ENCODE measurements at regions of chr12 and their contacts with region 1.

Region 1: GRCh38 chr12:111788178-111788654 is 21.5 kb downstream of the ALDH2 start:
- DNase-seq: no peak
- ATAC-seq: peak; percentile 75
- H3K4me3 ChIP-seq: no peak overlapping the region
- H3K27ac ChIP-seq: no peak overlapping the region
- H3K4me1 ChIP-seq: peaks cover 36% of the 10 kb centered on the region
- H3K27me3 ChIP-seq: no peaks in the 10 kb centered on the region
- CTCF ChIP-seq: peak; percentile 82
- EP300 ChIP-seq: no peak
- POLR2A ChIP-seq: no peak
- RAD21 ChIP-seq: peak; percentile 81

Region 2: DNA sequence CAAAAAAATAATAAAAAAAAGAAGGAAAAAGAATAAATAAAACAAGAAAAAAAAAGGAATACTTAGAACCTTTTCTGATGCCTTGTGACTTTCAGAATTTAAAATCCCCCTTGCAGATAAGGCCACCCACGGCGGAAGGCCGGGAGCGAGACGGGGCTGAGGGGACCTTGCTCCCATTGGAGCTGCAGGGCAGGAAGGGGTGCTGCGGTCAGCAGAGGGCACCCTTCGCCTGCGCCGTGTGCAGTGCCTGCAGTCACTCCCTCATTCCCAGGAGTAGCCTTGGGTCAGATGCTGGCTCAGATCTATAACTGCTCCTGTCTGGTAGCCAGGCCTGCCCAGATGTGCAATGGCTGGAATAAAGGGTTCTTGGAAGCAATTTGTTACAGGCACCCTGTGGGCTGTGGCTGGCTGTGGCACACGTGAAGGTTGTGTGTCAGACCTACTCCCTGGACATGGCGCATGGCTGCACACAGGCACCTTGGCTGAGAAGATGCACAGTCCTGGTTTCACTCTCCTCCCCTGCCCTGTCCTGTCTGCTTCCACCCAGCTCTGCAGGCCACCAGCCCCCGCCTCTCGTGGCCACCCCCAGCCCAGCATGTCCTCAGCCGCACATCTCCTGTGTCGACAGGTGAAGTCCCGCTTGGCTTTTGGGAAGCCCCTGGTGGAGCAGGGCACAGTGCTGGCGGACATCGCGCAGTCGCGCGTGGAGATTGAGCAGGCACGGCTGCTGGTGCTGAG is 34.9 kb before region 1 on chr12:
- CTCF ChIA-PET with region 1: interaction called, 43 read pairs
- POLR2A ChIA-PET with region 1: interaction called, 5 read pairs
- in situ Hi-C with region 1: loop called (anchors 5 kb)
- intact Hi-C with region 1: loop called (anchors 1 kb)
- DNase-seq: peak; percentile 53
- ATAC-seq: peak; percentile 98
- H3K4me3 ChIP-seq: no peak overlapping the region
- H3K27ac ChIP-seq: no peak overlapping the region
- H3K4me1 ChIP-seq: peaks cover 16% of the 10 kb centered on the region
- H3K27me3 ChIP-seq: no peaks in the 10 kb centered on the region
- CTCF ChIP-seq: peak; percentile 98
- EP300 ChIP-seq: no peak
- POLR2A ChIP-seq: no peak
- RAD21 ChIP-seq: peak; percentile 98

Region 3: GRCh38 chr12:111766608-111767361 is 21.4 kb before region 1 on chr12 and contains the start of gene ALDH2:
- CTCF ChIA-PET with region 1: no interaction called
- POLR2A ChIA-PET with region 1: interaction called, 17 read pairs
- in situ Hi-C with region 1: no loop called
- intact Hi-C with region 1: no loop called
- DNase-seq: peak; percentile 72
- ATAC-seq: peak; percentile 95
- H3K4me3 ChIP-seq: peak within 1 kb of the TSS; percentile 79 to 92 (median 80)
- H3K27ac ChIP-seq: peak within 1 kb of the TSS; percentile 74
- H3K4me1 ChIP-seq: peaks cover 48% of the 10 kb centered on the region
- H3K27me3 ChIP-seq: no peaks in the 10 kb centered on the region; a peak in 1 of 5 replicates
- CTCF ChIP-seq: peak; percentile 61
- EP300 ChIP-seq: no peak
- POLR2A ChIP-seq: peak; percentile 69 to 94
- RAD21 ChIP-seq: peak; percentile 59; the same call in 1 of the 2 replicates
- total RNA-seq, gene ALDH2: 72.8 and 103 TPM in 2 replicates

Region 4: DNA sequence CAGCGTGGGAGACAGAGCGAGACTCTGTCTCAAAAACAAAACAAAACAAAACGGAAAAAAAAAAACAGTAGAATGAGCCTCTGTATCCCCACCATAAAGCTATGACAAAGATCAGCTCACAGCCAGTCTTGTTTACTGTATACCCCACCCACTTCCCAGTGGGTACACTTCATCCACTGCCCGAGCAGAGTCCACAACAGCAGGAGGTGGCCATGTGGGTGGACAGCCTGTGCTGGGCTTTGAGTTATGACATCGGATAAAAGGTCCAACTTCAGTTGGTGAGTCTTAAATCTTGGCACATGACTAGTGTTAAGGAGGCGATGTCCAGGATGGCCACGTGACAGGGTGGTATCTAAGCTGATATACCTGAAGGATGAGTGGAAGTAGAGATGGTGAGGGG is 19.0 kb after region 1 on chr12:
- CTCF ChIA-PET with region 1: no interaction called
- POLR2A ChIA-PET with region 1: no interaction called
- in situ Hi-C with region 1: no loop called
- intact Hi-C with region 1: no loop called
- DNase-seq: no peak
- ATAC-seq: peak; percentile 83
- H3K4me3 ChIP-seq: no peak overlapping the region
- H3K27ac ChIP-seq: no peak overlapping the region
- H3K4me1 ChIP-seq: peaks cover 15% of the 10 kb centered on the region
- H3K27me3 ChIP-seq: no peaks in the 10 kb centered on the region
- CTCF ChIP-seq: no peak
- EP300 ChIP-seq: no peak
- POLR2A ChIP-seq: no peak
- RAD21 ChIP-seq: no peak

Region 5: GRCh38 chr12:111887926-111888745 is 99.9 kb after region 1 on chr12:
- CTCF ChIA-PET with region 1: no interaction called
- POLR2A ChIA-PET with region 1: no interaction called
- in situ Hi-C with region 1: no loop called
- intact Hi-C with region 1: no loop called
- DNase-seq: no peak
- ATAC-seq: no peak
- H3K4me3 ChIP-seq: no peak overlapping the region
- H3K27ac ChIP-seq: no peak overlapping the region
- H3K4me1 ChIP-seq: no peaks in the 10 kb centered on the region
- H3K27me3 ChIP-seq: no peaks in the 10 kb centered on the region
- CTCF ChIP-seq: no peak
- EP300 ChIP-seq: no peak
- POLR2A ChIP-seq: no peak
- RAD21 ChIP-seq: no peak

Region 6: DNA sequence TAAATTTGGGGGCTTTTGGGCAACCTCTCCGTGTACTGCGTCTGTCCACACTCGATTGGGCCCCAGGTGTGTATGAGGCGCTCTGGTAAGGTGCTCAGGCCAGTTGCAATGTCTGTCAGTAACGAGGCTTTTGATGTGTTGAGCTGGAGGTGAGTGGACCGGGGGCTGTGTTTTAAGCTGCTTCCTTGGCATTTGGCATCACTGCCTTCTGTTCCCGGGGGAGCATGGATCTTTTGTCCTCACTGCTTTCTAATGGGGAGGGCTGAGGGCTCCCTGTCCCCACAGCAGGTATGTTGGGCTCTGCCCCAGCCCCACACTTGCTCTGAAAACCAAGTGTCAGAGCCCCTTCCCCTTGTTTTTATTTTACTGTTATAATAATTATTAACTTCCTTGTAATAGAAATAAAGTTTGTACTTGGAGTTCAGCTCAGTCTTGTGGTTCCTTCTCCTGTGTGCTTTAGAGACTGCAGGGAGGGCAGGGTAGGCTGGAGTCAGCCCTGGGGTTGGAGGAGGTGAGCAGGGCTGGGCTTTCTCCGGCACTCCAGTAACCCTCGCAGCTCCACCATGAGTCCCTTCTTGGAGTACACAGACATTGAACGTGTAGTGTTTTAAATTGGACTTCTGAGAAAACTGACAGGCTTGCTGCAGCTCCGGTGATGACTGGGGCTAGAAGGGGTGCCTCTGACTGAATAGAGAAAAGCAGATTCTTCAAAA is 365.1 kb after region 1 on chr12:
- CTCF ChIA-PET with region 1: no interaction called
- POLR2A ChIA-PET with region 1: no interaction called
- in situ Hi-C with region 1: no loop called
- intact Hi-C with region 1: no loop called
- DNase-seq: no peak
- ATAC-seq: no peak; the same call in 2 of the 3 replicates
- H3K4me3 ChIP-seq: no peak overlapping the region
- H3K27ac ChIP-seq: no peak overlapping the region
- H3K4me1 ChIP-seq: peaks cover 16% of the 10 kb centered on the region
- H3K27me3 ChIP-seq: no peaks in the 10 kb centered on the region; a peak in 1 of 5 replicates
- CTCF ChIP-seq: no peak
- EP300 ChIP-seq: no peak
- POLR2A ChIP-seq: no peak
- RAD21 ChIP-seq: no peak